H1 (cell line): ENCODE measurements at regions of chr17 and their contacts with region 1.

Region 1: DNA sequence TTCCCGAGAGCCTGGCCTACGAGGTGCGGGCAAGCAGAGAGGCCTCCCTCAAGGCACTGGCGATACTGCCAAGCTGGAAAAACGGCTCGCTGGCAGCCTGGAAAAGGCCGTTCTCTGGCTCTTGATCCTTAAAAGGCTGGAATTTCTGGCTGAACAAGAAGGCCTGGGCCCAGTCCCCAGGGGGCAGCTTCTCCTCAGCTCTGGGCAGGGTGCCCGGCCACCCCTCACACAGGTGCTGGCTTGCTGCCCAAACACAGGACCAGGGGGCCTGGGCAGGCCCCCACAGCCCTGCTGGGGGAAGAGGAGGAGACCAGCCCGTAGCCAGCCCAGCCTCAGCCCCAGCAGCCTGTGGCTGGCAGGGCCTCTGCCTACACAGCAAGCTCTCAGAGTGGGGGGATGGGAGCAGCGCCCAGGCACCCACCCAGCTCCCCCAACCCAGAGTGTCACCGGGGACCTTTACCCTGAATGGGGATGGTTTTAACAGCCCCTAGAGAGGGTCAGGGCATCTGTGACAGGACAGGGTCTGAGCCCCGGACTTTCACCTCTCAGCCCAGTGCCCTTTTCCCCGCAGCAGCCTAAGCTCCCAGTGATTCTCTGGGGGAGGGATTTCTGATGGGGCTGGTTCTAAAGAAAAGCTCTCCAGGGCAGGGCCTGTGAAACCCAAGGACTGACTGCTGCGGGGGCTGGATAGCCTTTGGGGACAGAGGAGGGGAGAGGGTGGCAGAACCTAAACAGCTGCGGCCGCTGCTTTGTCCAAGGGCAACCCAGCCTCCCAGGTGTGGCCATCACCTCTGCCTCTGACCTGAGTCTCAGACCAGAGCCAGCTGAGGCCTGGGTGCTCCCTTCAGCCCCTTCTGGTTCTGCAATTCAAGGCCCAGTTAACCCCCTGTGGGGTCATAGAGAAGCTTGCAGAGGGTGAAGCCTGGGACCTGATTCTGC is 38.6 kb upstream of the TOB1 start:
- DNase-seq: peak in 1 of 2 experiments; percentile 72
- H3K4me3 ChIP-seq: no peak overlapping the region
- H3K27ac ChIP-seq: peak overlapping the region; percentile 32; the same call in 1 of the 2 replicates
- H3K4me1 ChIP-seq: peaks cover 9 to 39% (median 28%) of the 10 kb centered on the region in 4 experiments
- H3K27me3 ChIP-seq: no peaks in the 10 kb centered on the region
- CTCF ChIP-seq: no peak
- EP300 ChIP-seq: no peak
- POLR2A ChIP-seq: no peak
- RAD21 ChIP-seq: no peak

Region 2: DNA sequence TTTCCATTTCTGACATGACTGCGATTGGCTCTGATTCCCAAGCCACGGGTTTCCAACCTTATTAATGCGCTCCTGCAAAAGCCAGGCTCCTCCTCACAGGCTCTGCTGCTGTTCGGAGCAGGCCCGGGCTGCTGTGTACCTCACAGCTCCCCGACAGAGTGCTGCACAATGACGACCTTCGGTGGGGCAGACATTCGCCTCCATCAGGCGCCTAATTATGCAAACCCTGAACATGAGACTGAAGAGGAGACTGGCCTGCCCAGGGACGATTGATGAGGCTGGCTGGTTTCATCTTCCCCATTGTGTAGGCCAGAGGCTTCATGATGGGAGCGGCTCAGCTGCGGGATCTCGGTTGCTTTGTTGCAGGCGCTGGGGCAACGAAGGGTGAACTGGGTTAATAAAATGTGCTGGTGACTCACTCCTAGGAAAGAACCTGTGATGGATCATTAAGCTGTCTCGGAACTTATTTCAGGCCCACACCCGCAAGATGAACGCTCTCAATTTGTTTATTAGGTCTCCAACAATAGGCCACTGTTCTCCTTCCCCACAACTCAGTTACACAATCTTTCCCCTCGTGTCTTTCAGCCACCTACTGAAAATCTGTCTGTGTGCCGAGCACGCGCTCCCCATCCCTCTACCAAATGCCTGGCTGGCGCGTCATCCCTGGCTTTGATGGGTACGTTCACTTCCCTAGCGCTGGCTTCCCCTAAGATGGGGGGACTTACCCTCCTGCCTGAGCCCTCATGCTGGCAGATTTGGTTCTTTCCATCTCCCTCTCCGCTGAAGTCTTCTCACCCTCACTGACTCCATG is 11.4 kb before region 1 on chr17:
- CTCF ChIA-PET with region 1: interaction called, 13 read pairs
- POLR2A ChIA-PET with region 1: interaction called, 15 read pairs
- DNase-seq: no peak
- H3K4me3 ChIP-seq: no peak overlapping the region
- H3K27ac ChIP-seq: no peak overlapping the region
- H3K4me1 ChIP-seq: peaks cover 8 to 20% (median 15%) of the 10 kb centered on the region in 4 experiments
- H3K27me3 ChIP-seq: no peaks in the 10 kb centered on the region
- CTCF ChIP-seq: no peak
- EP300 ChIP-seq: no peak
- POLR2A ChIP-seq: no peak
- RAD21 ChIP-seq: no peak

Region 3: GRCh38 chr17:50919321-50920085 is 14.7 kb after region 1 on chr17:
- CTCF ChIA-PET with region 1: interaction called, 7 read pairs
- POLR2A ChIA-PET with region 1: interaction called, 10 read pairs
- DNase-seq: peak in 1 of 2 experiments; percentile 82
- H3K4me3 ChIP-seq: no peak overlapping the region
- H3K27ac ChIP-seq: no peak overlapping the region; the same call in 1 of the 2 replicates
- H3K4me1 ChIP-seq: peaks cover 2 to 48% (median 34%) of the 10 kb centered on the region in 4 experiments
- H3K27me3 ChIP-seq: peaks cover 0 to 2% (median 0%) of the 10 kb centered on the region in 4 experiments; a peak in 2 of 7 replicates
- CTCF ChIP-seq: no peak
- EP300 ChIP-seq: no peak
- POLR2A ChIP-seq: no peak
- RAD21 ChIP-seq: no peak